ENCODE measurements at regions of chr1 and their contacts with region 1.

Region 1: GRCh38 chr1:182084487-182085316 is 23.2 kb upstream of the ZNF648 start:
- DNase-seq: peak; percentile 82 to 86 (median 85)
- H3K4me3 ChIP-seq: no peak overlapping the region
- H3K4me3 Mint-ChIP-seq: no peak overlapping the region
- H3K27ac ChIP-seq: no peak overlapping the region
- H3K27ac Mint-ChIP-seq: peak overlapping the region in 3 of 7 donors; percentile 4 to 76 (median 50)
- H3K4me1 ChIP-seq: peaks cover 6 to 7% of the 10 kb centered on the region in 2 donors
- H3K4me1 Mint-ChIP-seq: peaks cover 13% of the 10 kb centered on the region
- H3K27me3 ChIP-seq: no peaks in the 10 kb centered on the region
- H3K27me3 Mint-ChIP-seq: peaks cover 0 to 2% (median 0%) of the 10 kb centered on the region in 3 donors
- CTCF ChIP-seq: peak; percentile 87

Region 2: DNA sequence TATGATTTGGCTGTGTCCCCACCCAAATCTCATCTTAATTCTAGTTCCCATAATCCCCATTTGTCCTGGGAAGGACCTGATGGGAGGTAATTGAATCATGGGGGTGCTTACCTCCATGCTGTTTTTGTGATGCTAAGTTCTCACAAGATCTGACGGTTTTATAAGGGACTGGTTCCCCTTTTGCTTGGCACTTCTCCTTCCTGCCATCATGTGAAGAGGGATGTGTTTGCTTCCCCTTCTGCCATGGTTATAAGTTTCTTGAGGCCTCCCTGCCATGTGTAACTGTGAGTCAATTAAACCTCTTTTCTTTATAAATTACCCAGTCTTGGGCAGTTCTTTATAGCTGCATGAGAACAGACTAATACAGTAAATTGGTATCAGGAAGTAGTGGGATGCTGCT is 137.3 kb before region 1 on chr1:
- intact Hi-C with region 1: no loop called
- DNase-seq: no peak
- H3K4me3 ChIP-seq: no peak overlapping the region
- H3K4me3 Mint-ChIP-seq: no peak overlapping the region
- H3K27ac ChIP-seq: no peak overlapping the region
- H3K27ac Mint-ChIP-seq: no peak overlapping the region
- H3K4me1 ChIP-seq: no peaks in the 10 kb centered on the region
- H3K4me1 Mint-ChIP-seq: no peaks in the 10 kb centered on the region
- H3K27me3 ChIP-seq: no peaks in the 10 kb centered on the region
- H3K27me3 Mint-ChIP-seq: peaks cover 0 to 4% (median 2%) of the 10 kb centered on the region in 3 donors
- CTCF ChIP-seq: no peak

Region 3: DNA sequence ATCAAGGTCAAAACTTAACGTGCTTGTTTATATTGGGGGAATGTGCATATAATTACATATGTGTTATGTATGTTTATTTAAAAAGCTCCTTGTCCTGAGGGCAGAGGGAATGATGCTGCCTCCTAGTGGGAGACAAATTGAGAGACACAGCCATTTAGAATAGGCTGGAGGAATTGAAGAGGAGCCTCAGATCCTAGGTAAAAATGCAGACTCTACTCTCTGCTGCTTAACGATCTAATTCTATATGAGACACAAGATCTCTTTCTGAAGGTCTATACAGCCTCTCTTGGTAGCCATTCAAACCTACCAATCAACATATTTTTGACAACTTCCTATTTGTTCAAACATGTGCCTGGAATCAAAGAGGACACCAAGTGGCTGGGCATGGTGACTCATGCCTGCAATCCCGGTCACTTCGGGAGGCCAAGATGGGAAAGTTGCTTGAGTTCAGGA is 113.4 kb after region 1 on chr1:
- intact Hi-C with region 1: loop called (anchors 5 to 10 kb)
- DNase-seq: peak in 2 of 3 donors; percentile 31 to 43
- H3K4me3 ChIP-seq: no peak overlapping the region
- H3K4me3 Mint-ChIP-seq: no peak overlapping the region
- H3K27ac ChIP-seq: no peak overlapping the region
- H3K27ac Mint-ChIP-seq: peak overlapping the region in 1 of 7 donors; percentile 20
- H3K4me1 ChIP-seq: peaks cover 17 to 30% of the 10 kb centered on the region in 2 donors
- H3K4me1 Mint-ChIP-seq: peaks cover 30% of the 10 kb centered on the region
- H3K27me3 ChIP-seq: no peaks in the 10 kb centered on the region
- H3K27me3 Mint-ChIP-seq: no peaks in the 10 kb centered on the region
- CTCF ChIP-seq: peak; percentile 67

Region 4: GRCh38 chr1:182397771-182398393 is 313.2 kb after region 1 on chr1:
- intact Hi-C with region 1: loop called (anchors 1 kb)
- DNase-seq: peak in 1 of 3 donors; percentile 55
- H3K4me3 ChIP-seq: no peak overlapping the region
- H3K4me3 Mint-ChIP-seq: no peak overlapping the region
- H3K27ac ChIP-seq: no peak overlapping the region
- H3K27ac Mint-ChIP-seq: peak overlapping the region in 4 of 7 donors; percentile 20 to 77 (median 50)
- H3K4me1 ChIP-seq: peaks cover 31 to 40% of the 10 kb centered on the region in 2 donors
- H3K4me1 Mint-ChIP-seq: peaks cover 44% of the 10 kb centered on the region
- H3K27me3 ChIP-seq: no peaks in the 10 kb centered on the region
- H3K27me3 Mint-ChIP-seq: peaks cover 0 to 3% (median 2%) of the 10 kb centered on the region in 3 donors
- CTCF ChIP-seq: no peak

Region 5: DNA sequence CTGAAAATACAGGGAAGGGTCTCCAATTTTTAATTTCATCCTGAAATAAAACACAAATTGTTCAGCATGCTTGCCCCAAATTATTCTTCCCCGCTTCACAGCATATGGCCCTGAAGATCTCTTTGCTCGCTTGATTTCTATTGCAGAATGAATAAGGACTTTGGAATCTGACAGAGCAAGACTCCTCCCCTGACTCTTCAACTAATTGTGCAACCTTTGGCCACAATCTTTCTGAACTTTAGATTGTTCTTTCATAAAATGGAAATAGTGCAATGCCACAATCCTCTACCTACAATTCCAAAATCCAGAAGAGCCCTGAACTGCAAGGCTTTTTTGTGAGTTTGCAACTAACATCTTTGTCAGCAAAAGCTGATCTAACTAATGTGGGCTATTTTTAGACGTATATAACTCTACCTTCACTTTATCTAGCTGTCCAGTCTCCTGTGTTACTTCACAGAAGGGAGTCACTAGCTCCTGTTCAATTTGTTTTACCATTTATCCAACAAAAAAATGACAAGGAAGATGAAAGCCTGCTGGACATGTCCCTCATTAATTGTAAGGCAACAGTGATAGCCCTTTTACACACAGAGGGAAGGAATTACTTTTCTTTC is 490.9 kb after region 1 on chr1:
- intact Hi-C with region 1: no loop called
- DNase-seq: no peak
- H3K4me3 ChIP-seq: no peak overlapping the region
- H3K4me3 Mint-ChIP-seq: no peak overlapping the region
- H3K27ac ChIP-seq: no peak overlapping the region
- H3K27ac Mint-ChIP-seq: no peak overlapping the region
- H3K4me1 ChIP-seq: no peaks in the 10 kb centered on the region
- H3K4me1 Mint-ChIP-seq: peaks cover 5% of the 10 kb centered on the region
- H3K27me3 ChIP-seq: no peaks in the 10 kb centered on the region
- H3K27me3 Mint-ChIP-seq: peaks cover 0 to 2% (median 0%) of the 10 kb centered on the region in 3 donors
- CTCF ChIP-seq: no peak

Region 6: DNA sequence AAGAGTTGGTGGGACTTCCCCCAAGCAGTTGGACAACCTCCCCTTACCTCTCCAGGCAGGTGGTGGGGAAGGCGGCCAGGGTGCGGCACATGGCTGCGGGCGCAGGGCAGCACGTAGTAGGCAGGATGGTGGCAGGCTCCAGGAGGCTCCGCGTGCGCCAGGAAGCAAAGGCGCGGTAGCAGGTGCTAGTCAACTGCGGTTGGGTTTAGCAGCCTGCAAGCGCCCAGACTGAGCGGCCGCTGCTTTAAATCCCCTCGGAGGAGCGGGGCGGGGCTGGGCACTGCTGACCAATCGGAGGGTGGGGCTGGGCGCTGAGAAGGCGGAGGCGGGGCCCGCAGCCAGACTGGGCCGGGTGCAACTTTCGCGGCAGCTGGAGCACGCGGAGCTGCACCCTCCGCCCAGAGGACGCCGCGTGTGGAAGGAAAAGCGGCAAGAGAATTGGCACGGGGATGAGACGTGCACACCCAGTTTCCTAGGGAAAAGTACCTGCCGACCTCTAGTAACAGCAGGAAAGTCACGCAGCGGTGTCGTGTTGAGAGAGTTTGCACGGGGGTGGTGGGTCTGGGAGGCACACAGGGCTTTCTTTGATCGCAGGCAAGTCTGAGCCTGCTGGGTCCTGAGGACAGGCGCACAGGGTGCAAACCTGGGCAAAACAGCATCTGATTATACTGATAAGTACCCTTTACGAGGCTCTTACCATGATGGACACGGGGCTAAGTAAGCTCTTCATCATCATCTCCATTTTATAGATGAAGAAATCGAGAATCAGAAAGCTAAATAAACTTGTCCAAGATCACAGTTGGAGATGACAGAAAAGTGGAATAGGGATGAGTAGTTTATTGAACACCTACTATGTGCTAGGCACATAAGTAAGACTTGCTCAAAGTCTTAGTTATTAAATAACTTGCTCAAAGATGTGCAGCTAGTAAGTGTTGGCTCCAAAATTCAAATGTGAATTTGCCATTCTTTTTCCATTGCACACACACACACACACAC is 519.8 kb after region 1 on chr1 and contains the start of gene RGS16:
- intact Hi-C with region 1: loop called in 1 of 2 experiments (anchors 10 kb)
- DNase-seq: peak; percentile 72 to 79 (median 77)
- H3K4me3 ChIP-seq: peak within 1 kb of the TSS in 2 of 3 experiments; percentile 5 to 68
- H3K4me3 Mint-ChIP-seq: peak within 1 kb of the TSS; percentile 9 to 77
- H3K27ac ChIP-seq: no peak within 1 kb of the TSS
- H3K27ac Mint-ChIP-seq: peak within 1 kb of the TSS in 3 of 7 donors; percentile 16 to 52 (median 33)
- H3K4me1 ChIP-seq: peaks cover 11 to 13% of the 10 kb centered on the region in 2 donors
- H3K4me1 Mint-ChIP-seq: peaks cover 20% of the 10 kb centered on the region
- H3K27me3 ChIP-seq: peaks cover 13 to 46% of the 10 kb centered on the region in 2 donors
- H3K27me3 Mint-ChIP-seq: peaks cover 9 to 23% (median 19%) of the 10 kb centered on the region in 3 donors
- CTCF ChIP-seq: no peak
- polyA plus RNA-seq, gene RGS16: 0.07 to 0.44 TPM in 2 of 3 donors, not detected in the other

Region 7: DNA sequence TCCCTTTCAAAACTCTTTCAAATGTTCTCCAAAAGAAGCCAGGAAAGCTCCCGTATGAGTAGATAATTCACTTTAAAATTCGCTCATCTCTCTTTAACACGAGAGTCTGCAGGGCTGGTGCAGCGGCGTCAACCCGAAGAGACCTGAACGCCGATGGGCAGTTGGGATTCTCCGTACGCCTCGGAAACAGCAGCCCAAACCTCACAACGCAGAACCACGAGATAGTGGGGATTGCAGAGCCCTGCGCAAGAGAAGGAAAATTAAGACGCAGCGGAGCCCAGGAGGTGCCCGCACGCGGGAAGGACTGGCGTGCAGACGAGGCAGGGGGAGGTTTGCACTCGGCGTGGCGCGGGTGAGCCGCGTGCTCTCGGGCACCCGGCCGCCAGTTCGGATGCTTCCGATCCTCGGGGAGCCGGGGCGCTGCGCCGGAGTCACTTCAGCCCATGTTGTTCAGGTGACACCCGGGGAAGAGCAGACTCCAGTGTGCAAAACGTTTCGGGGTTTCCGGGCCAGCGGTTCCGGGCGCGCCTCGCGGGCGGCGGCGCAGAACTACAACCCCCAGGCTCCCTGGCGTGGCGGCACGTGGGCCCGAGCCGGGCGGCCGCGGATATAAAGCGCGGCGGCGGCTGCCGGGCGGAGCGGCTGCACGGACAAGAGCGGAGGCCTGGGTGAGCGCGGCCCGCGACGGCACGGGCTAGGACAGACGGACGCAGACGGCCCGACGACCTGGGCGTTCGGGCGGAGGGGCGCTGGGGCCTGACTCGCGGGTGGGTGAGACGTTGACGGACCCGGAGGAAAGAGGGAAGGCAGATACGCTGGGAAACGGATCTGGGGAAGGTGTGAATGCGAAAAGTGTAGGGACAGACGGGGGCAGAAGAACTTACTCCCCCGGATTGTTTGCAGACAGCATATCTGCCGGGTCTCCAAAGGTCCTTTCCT is 704.7 kb after region 1 on chr1 and contains the start of gene NPL:
- intact Hi-C with region 1: loop called in 1 of 2 experiments (anchors 10 kb)
- DNase-seq: peak; percentile 74 to 82 (median 76)
- H3K4me3 ChIP-seq: peak within 1 kb of the TSS; percentile 62 to 79 (median 74)
- H3K4me3 Mint-ChIP-seq: peak within 1 kb of the TSS; percentile 93 to 95
- H3K27ac ChIP-seq: peak within 1 kb of the TSS; percentile 46 to 88
- H3K27ac Mint-ChIP-seq: peak within 1 kb of the TSS; percentile 86 to 96 (median 89)
- H3K4me1 ChIP-seq: peaks cover 32 to 47% of the 10 kb centered on the region in 2 donors
- H3K4me1 Mint-ChIP-seq: peaks cover 58% of the 10 kb centered on the region
- H3K27me3 ChIP-seq: peaks cover 3 to 11% of the 10 kb centered on the region in 2 donors
- H3K27me3 Mint-ChIP-seq: peaks cover 16 to 24% (median 18%) of the 10 kb centered on the region in 3 donors
- CTCF ChIP-seq: no peak
- polyA plus RNA-seq, gene NPL: 56.6 to 127 (median 127) TPM